CD8-positive, alpha-beta T cell (primary cell): ENCODE measurements at regions of chr12 and their contacts with region 1.

Region 1: DNA sequence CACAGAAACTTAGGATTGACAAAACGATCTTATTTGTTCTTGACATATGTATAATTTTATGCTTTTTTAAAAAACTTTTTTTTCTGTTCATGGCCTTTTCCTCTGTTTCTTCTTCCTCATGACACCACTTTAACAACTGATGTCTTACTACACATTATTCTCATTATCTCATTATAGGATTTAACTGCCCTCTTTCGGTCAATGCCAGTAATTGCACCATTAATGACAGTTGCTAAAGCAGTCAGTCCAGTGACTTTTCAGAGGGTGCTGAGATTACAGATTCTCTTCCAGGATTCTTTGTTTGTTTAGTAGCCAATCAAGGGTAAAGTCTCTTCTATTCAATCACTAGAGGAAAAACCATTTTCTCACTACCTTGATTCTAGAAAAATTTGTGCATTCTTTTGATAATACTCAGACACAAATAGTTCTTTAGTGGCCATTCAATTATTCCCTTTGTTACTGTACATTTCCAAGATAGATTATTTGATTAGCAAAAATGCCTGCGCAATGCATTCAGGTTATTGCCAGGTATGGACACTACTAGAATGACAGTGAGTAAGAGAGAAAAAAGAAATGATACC is 50.1 kb downstream of the KLRG1 start:
- DNase-seq: peak in 2 of 9 experiments; percentile 68 to 79
- ATAC-seq: peak; percentile 93
- H3K4me3 ChIP-seq: no peak overlapping the region
- H3K4me3 Mint-ChIP-seq: no peak overlapping the region
- H3K27ac ChIP-seq: peak overlapping the region in 1 of 2 experiments; percentile 51
- H3K27ac Mint-ChIP-seq: peak overlapping the region; percentile 21
- H3K4me1 ChIP-seq: peaks cover 36% of the 10 kb centered on the region
- H3K4me1 Mint-ChIP-seq: peaks cover 51% of the 10 kb centered on the region
- H3K27me3 ChIP-seq: no peaks in the 10 kb centered on the region
- H3K27me3 Mint-ChIP-seq: no peaks in the 10 kb centered on the region
- CTCF ChIP-seq: peak; percentile 96

Region 2: GRCh38 chr12:8989413-8989812 is 50.1 kb before region 1 on chr12 and contains the start of gene KLRG1:
- CTCF ChIA-PET with region 1: interaction called, 5 read pairs
- POLR2A ChIA-PET with region 1: interaction called, 3 read pairs
- intact Hi-C with region 1: loop called (anchors 5 kb)
- DNase-seq: peak in 2 of 9 experiments; percentile 41 to 62
- ATAC-seq: peak; percentile 60
- H3K4me3 ChIP-seq: peak within 1 kb of the TSS; percentile 40 to 63
- H3K4me3 Mint-ChIP-seq: peak within 1 kb of the TSS; percentile 79
- H3K27ac ChIP-seq: peak within 1 kb of the TSS; percentile 54 to 83
- H3K27ac Mint-ChIP-seq: peak within 1 kb of the TSS; percentile 75
- H3K4me1 ChIP-seq: peaks cover 60% of the 10 kb centered on the region
- H3K4me1 Mint-ChIP-seq: peaks cover 72% of the 10 kb centered on the region
- H3K27me3 ChIP-seq: no peaks in the 10 kb centered on the region
- H3K27me3 Mint-ChIP-seq: no peaks in the 10 kb centered on the region
- CTCF ChIP-seq: no peak
- total RNA-seq, gene KLRG1: 13.8 to 17.7 TPM

Region 3: DNA sequence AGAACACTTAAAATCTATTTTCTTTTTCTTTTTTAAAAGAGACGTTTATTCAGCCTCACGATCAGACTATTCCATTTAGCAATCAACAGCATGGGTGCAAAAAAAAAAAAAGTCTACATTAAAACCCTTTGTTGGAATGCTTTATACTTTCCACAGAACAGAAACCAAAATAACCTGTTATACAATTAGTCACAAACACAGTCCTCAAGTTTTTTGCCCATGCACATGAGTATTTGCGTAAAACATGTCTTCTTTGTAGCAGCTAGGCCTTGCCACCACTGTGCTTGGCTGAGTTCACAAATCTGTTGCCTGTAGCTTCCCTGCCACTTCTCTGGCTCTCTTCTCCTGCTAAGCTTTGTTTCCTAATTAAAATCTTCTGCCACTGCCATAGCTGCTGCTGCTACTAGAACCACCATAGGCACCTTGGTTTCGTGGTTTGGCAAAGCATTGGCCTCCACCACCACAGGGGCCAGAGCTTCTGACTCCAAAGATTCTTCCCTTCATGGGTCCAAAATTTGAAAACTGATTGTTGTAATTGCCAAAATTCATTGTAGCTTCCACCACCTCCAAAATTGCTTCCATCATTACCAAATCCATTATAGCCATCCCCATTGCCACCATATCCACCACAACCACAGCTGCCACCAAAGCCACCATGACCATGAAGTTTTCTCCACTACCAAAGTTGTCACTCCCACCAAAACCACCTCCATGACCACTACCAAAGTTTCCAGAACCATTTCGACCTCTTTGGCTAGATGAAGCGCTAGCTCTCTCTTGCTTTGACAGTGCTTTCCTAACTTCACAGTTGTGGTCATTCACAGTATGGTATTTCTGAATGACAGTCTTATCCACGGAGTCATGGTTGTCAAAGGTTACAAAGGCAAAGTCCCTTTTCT is 12.1 kb before region 1 on chr12:
- CTCF ChIA-PET with region 1: interaction called, 11 read pairs
- POLR2A ChIA-PET with region 1: interaction called, 7 read pairs
- intact Hi-C with region 1: loop called in 1 of 2 experiments (anchors 1 kb)
- DNase-seq: peak in 4 of 9 experiments; percentile 20 to 59 (median 28)
- ATAC-seq: no peak
- H3K4me3 ChIP-seq: no peak overlapping the region
- H3K4me3 Mint-ChIP-seq: peak overlapping the region; percentile 38
- H3K27ac ChIP-seq: peak overlapping the region in 1 of 2 experiments; percentile 86
- H3K27ac Mint-ChIP-seq: peak overlapping the region; percentile 95
- H3K4me1 ChIP-seq: peaks cover 79% of the 10 kb centered on the region
- H3K4me1 Mint-ChIP-seq: peaks cover 50% of the 10 kb centered on the region
- H3K27me3 ChIP-seq: no peaks in the 10 kb centered on the region
- H3K27me3 Mint-ChIP-seq: no peaks in the 10 kb centered on the region
- CTCF ChIP-seq: no peak